Psoas muscle (tissue), 8 donors: ENCODE measurements at regions of chr20 and their contacts with region 1.

Region 1: DNA sequence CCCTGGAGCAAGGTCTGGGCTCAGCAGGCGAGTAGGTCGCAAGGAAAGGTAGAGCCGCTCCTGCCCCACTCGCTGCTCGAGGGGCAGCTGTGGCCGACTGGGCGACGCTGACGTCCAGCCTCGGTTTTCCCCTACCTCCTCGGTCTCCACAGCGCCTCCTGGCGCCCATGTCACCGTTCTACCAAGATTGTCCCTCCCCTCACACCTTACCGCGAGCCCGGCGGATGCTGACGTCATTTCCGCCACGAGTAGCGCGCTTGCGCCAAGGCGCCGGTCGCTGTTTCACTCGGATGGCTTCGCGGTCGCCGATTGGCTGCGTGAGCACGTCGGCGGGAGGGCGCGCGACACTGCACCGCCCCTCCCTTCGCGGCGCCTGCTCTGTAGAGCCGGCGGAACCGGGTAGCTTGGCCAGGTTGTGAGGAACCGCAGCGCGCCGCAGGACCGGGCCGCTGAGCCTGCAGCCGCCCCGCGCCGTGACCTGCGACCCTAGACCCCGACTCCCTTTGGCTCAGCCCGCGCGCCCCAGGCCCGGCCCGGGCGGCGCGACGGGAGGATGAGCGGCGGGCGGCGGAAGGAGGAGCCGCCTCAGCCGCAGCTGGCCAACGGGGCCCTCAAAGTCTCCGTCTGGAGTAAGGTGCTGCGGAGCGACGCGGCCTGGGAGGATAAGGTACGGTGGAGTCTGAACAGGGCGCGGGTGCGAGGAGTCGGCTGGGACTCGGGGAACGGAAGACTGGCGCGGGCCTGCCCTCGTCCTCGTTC is at the start of gene RAB5IF:
- DNase-seq: peak; percentile 99 to 100
- ATAC-seq: peak; percentile 94 to 96 (median 96)
- H3K4me3 ChIP-seq: peak within 1 kb of the TSS; percentile 88
- H3K27ac ChIP-seq: peak within 1 kb of the TSS; percentile 92
- H3K4me1 ChIP-seq: peaks cover 16% of the 10 kb centered on the region
- H3K27me3 ChIP-seq: no peaks in the 10 kb centered on the region
- CTCF ChIP-seq: peak; percentile 93
- total RNA-seq, gene RAB5IF: 77.3 to 368 (median 215) TPM

Region 2: DNA sequence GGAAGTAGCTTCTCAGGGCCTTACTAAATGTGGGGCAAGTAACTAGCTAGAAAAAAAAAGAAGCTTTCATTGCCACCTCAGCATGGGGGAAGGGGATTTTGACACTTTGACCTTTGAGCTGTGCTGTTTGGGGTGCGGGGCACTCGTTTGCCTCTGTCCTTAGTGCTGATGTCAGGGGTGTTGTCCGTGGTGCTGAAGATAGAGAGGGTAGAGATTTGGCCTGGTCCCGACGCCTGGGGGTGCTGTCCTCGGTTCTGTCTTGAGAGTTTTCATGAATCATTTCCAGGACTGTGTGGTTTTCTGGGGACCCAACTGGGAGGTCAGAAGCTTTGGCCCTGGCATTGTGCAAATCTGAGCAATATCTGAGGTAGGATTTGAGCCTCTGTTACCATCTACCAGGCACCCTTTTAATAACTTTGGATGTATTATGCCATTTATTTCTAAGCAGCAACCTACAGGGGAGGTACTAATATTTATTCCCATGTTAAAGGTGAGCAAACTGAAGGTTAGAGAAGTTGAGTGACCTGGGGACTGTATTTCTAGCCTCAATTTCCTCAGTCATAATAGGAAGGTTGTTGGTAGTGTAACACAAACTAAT is 221.5 kb before region 1 on chr20:
- intact Hi-C with region 1: no loop called
- DNase-seq: no peak
- ATAC-seq: peak in 1 of 4 donors; percentile 38
- H3K4me3 ChIP-seq: no peak overlapping the region
- H3K27ac ChIP-seq: no peak overlapping the region
- H3K4me1 ChIP-seq: no peaks in the 10 kb centered on the region
- H3K27me3 ChIP-seq: peaks cover 0 to 8% (median 0%) of the 10 kb centered on the region in 3 donors
- CTCF ChIP-seq: no peak

Region 3: DNA sequence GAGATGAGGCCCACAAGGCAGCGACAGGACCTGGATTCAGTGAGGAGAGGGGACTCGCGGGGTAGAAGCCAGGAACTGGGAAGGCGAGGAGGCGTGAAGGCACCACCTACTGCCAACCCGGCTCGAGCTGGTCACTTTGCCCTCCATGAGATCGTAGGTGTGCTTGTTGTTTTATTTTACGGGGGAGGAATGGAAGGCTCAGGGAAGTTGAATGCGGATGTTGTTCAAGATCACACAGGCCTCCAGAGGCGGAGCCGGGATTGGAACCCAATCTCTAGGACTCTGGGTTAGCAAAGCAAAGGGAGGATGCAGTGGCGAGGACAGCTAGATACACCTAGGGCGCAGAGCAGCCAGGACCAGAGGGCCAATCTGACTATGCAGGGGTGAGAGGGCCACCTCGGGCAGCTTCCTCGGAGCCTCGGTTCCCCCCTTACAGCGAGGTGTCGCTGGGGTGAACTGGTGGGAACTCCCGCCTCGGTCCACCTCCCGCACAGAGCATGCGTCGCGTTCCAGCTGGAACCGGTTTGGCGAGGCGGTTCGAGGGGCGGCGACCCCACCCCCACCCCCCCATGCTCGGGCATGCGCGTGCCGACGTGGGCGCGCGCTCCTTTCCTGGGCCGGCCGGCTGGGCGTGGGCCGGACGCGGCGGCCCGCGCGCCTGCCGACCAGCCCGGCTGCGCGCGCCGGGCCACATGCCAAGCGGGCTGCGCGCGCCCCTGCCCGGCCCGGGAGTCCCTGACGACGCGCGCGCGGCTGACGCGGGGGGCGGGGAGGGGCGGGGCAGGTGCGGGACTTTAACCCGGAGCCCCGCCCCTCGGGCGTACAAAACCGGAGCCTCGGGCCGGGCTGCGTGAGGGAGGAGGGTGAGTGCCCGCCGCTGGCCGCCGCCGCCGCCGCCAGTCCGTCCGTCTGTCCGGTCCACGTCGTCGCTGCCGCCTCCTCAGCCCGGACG is 144.7 kb before region 1 on chr20:
- intact Hi-C with region 1: loop called in 1 of 2 experiments (anchors 10 kb)
- DNase-seq: peak; percentile 96 to 97
- ATAC-seq: peak; percentile 67 to 79 (median 70)
- H3K4me3 ChIP-seq: peak overlapping the region; percentile 99
- H3K27ac ChIP-seq: peak overlapping the region; percentile 100
- H3K4me1 ChIP-seq: peaks cover 35% of the 10 kb centered on the region
- H3K27me3 ChIP-seq: no peaks in the 10 kb centered on the region
- CTCF ChIP-seq: no peak

Region 4: DNA sequence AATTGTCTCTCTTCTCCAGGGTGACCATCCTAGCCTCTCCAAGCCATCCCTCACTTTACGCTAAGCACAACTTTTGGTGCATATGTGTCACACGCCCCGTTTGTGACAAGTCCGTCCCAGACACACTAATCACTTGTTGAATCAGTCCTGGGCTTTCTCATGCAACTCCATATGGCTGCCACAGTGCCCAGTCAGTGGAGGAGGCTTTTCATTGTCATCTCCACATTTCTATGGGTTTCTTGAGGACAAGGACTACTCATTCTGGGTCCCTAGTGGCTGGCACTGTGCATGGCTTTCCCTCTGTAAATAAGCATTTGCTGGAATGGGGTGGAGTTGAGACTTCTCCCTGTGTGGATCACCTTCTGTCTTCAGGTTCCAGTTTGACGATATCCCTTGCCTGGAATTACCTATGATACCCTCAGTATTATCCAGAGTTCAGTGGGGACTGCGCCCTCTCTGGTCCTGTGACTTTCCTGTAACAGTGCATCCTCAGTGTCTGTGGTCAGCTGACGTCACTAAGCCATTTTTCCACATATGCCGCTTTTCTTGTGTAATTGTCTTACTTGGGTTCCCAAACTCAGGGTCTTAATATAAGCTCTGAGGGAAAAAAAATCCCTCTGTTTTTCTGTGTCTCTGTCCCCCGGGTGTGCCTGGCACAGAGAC is 124.1 kb before region 1 on chr20:
- intact Hi-C with region 1: loop called in 1 of 2 experiments (anchors 10 kb)
- DNase-seq: peak in 1 of 2 donors; percentile 29
- ATAC-seq: peak; percentile 47 to 58 (median 50)
- H3K4me3 ChIP-seq: peak overlapping the region; percentile 22
- H3K27ac ChIP-seq: peak overlapping the region; percentile 89
- H3K4me1 ChIP-seq: peaks cover 98% of the 10 kb centered on the region
- H3K27me3 ChIP-seq: no peaks in the 10 kb centered on the region
- CTCF ChIP-seq: peak; percentile 27

Region 5: GRCh38 chr20:36562724-36563123 is 42.9 kb before region 1 on chr20:
- intact Hi-C with region 1: loop called in 1 of 2 experiments (anchors 1 kb)
- DNase-seq: no peak
- ATAC-seq: no peak
- H3K4me3 ChIP-seq: no peak overlapping the region
- H3K27ac ChIP-seq: no peak overlapping the region
- H3K4me1 ChIP-seq: no peaks in the 10 kb centered on the region
- H3K27me3 ChIP-seq: no peaks in the 10 kb centered on the region
- CTCF ChIP-seq: no peak

Region 6: DNA sequence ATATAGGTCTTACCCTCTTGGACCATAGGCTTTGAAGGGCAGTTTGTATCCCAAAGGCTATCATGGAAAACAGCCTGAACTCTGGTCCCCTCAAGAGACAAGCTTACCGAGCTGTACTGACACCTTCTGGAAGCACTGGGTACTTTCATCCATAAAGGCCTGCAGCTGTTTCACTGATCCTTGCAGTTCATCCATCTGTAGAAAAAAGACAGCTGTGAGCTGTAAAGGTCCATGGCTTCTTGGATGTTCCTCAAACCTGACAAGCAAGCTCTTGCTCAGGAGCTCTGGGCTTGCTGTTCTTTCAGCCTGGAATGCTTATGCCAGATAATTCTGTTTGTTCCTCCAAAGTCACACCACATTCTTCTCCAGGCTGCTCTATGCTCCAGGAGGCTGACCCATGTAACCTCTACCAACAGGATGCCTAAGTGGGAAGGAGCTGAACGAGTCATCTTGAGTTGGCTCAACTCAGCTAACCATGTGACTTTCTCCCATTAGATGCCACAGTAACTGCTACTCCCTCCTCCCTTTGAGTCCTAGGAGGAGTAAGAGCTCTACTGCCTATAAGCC is 149.2 kb after region 1 on chr20:
- intact Hi-C with region 1: loop called in 1 of 2 experiments (anchors 10 kb)
- DNase-seq: no peak
- ATAC-seq: peak; percentile 96 to 99 (median 97)
- H3K4me3 ChIP-seq: no peak overlapping the region
- H3K27ac ChIP-seq: no peak overlapping the region
- H3K4me1 ChIP-seq: no peaks in the 10 kb centered on the region
- H3K27me3 ChIP-seq: no peaks in the 10 kb centered on the region
- CTCF ChIP-seq: peak; percentile 83